Activated naive CD4-positive, alpha-beta T cell treated with anti-CD3 and anti-CD28 coated beads for 36 hours (primary cell): ENCODE measurements at regions of chr12 and their contacts with region 1.

Region 1: DNA sequence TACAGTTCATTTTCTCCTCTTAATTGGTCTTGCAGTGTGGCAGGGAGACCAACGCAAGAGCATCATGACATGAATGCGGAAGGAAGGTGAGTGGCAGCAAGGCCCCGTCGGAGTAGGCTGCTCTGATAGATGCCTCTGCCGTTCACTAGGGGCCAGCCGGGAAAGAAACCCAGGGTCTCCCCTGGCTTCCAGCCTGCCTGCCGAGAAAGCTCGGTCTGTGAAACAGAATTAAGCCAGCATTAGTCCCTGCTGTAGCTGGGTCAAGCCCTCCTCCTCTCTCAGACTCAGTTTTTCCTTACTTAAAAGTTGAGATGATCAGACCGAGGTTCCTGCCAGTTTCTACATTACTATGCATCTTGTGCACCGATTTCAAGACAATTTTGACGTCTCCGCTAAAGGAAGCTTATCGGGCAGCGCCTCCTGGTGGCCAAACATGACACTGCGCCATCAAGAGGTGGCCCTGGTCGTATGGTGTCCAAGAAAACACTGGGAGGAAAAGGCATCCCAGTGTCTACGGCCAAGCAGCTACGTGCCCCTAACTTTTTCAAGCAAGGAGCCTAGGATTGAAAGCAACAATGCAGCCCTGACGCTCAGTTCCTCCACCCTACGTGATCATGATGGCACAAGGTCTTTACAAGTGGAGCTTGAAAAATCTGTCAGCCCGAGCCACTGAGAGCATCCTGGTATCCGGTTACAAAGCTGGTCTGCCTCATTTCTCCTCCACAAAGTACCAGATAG is 131.6 kb downstream of the KSR2 start:
- DNase-seq: peak; percentile 89
- H3K4me3 Mint-ChIP-seq: no peak overlapping the region
- H3K27ac Mint-ChIP-seq: no peak overlapping the region
- H3K4me1 Mint-ChIP-seq: peaks cover 4% of the 10 kb centered on the region
- H3K27me3 Mint-ChIP-seq: peaks cover 11% of the 10 kb centered on the region

Region 2: GRCh38 chr12:117212563-117213190 is 624.5 kb before region 1 on chr12:
- CTCF ChIA-PET with region 1: interaction called, 32 read pairs
- intact Hi-C with region 1: loop called (anchors 1 kb)
- DNase-seq: peak; percentile 83
- H3K4me3 Mint-ChIP-seq: no peak overlapping the region
- H3K27ac Mint-ChIP-seq: no peak overlapping the region
- H3K4me1 Mint-ChIP-seq: no peaks in the 10 kb centered on the region
- H3K27me3 Mint-ChIP-seq: no peaks in the 10 kb centered on the region

Region 3: DNA sequence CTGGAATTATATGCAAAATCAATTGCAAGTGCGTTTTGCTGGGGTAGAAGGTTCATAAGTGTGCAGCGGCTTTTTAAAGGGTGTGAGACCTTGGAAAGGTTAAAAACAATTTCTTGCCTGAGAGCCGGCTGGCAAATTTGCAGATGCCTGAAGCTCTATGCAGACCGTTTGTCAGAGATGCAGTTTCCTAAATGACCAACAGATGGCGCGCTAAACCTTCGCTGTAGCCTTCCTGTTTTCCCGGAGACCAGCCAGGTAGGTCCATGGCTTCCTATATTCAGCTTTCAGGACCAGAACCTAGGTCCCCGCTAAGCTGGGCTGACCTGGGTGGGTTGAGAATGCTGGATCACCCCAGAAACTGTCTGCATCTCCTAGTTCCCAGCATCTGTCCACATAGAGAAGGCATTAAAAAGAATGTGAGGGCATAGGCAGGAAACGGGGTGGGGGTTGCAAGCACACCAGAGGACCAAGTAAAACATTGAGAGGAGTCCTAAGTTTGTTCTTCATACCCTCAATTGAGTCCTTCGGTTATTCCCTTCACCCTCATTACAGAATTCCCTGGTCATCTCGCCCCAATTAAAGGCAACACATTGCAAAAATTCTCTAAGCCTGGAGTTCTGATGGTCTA is 470.0 kb before region 1 on chr12:
- CTCF ChIA-PET with region 1: interaction called, 44 read pairs
- intact Hi-C with region 1: loop called (anchors 1 kb)
- DNase-seq: peak; percentile 77
- H3K4me3 Mint-ChIP-seq: no peak overlapping the region
- H3K27ac Mint-ChIP-seq: no peak overlapping the region
- H3K4me1 Mint-ChIP-seq: no peaks in the 10 kb centered on the region
- H3K27me3 Mint-ChIP-seq: peaks cover 39% of the 10 kb centered on the region

Region 4: DNA sequence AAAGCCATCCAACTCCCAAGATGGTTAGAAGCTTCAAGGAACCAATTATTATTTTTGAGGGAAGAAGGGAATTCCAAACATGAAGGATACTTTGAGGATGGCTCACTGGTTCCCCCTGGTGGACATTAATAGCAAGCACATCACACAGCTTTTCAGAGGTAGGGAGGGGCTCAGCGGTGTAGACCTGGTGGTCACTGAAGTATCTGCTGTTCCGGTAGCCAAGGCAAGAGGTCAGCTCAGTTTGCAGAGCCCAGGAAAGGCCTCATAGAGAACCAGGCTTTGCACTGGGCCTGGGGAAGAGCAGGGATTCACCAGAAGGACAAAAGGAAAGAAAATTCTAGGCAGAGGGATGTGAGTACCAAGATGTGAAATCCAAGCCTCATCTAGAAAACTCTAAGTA is 12.9 kb after region 1 on chr12:
- CTCF ChIA-PET with region 1: interaction called, 21 read pairs
- intact Hi-C with region 1: no loop called
- DNase-seq: peak; percentile 6
- H3K4me3 Mint-ChIP-seq: no peak overlapping the region
- H3K27ac Mint-ChIP-seq: no peak overlapping the region
- H3K4me1 Mint-ChIP-seq: no peaks in the 10 kb centered on the region
- H3K27me3 Mint-ChIP-seq: peaks cover 30% of the 10 kb centered on the region

Region 5: DNA sequence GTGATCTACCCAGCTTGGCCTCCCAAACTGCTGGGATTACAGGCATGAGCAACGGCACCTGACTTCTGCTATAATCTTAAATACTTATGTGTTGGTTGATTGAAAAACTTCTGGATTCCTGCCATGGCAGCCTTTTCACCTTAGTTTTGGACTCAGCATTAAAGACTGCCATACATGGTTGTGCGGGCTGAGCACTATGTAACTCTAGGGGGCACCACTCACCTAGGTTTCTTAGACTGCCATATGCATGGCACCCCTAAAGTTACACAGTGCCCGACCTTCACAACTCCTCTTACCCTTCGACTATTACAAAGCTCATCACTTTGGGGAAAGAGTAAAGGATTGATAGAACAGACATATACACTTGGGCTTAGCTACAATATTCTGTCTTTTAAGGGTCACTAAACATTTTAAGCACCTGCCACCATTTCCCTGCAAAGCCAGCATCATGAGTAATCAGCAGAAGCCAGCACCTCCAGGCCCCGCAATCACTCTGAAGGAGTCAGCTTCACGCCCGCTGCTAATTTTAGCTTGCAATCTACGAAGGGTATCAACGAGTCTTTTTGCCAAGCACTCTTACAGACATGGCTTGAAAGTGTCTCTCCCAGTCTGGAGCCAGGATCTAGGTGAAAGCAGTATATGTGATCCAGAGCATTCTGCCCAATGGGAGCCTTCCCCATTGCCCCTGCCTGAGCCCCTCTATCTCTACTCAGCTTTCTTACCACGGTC is 599.0 kb after region 1 on chr12:
- CTCF ChIA-PET with region 1: no interaction called
- intact Hi-C with region 1: no loop called
- DNase-seq: no peak
- H3K4me3 Mint-ChIP-seq: no peak overlapping the region
- H3K27ac Mint-ChIP-seq: no peak overlapping the region
- H3K4me1 Mint-ChIP-seq: no peaks in the 10 kb centered on the region
- H3K27me3 Mint-ChIP-seq: peaks cover 3% of the 10 kb centered on the region